Left ventricle myocardium inferior (tissue), 1 donor: ENCODE measurements at regions of chr3 and their contacts with region 1.

Region 1: GRCh38 chr3:46909535-46910442 is 32.3 kb downstream of the PTH1R start:
- DNase-seq: peak; percentile 85
- H3K4me3 ChIP-seq: peak overlapping the region; percentile 17
- H3K27ac ChIP-seq: no peak overlapping the region
- H3K4me1 ChIP-seq: peaks cover 42% of the 10 kb centered on the region
- H3K27me3 ChIP-seq: no peaks in the 10 kb centered on the region
- CTCF ChIP-seq: peak; percentile 89

Region 2: GRCh38 chr3:46705022-46705530 is 204.7 kb before region 1 on chr3:
- intact Hi-C with region 1: loop called (anchors 5 kb)
- DNase-seq: peak; percentile 73
- H3K4me3 ChIP-seq: no peak overlapping the region
- H3K27ac ChIP-seq: no peak overlapping the region
- H3K4me1 ChIP-seq: peaks cover 24% of the 10 kb centered on the region
- H3K27me3 ChIP-seq: no peaks in the 10 kb centered on the region
- CTCF ChIP-seq: peak; percentile 98

Region 3: GRCh38 chr3:46737329-46737731 is 172.5 kb before region 1 on chr3:
- intact Hi-C with region 1: no loop called
- DNase-seq: no peak
- H3K4me3 ChIP-seq: no peak overlapping the region
- H3K27ac ChIP-seq: no peak overlapping the region
- H3K4me1 ChIP-seq: peaks cover 6% of the 10 kb centered on the region
- H3K27me3 ChIP-seq: peaks cover 17% of the 10 kb centered on the region
- CTCF ChIP-seq: no peak